ENCODE measurements at regions of chr13 and their contacts with region 1.

Region 1: DNA sequence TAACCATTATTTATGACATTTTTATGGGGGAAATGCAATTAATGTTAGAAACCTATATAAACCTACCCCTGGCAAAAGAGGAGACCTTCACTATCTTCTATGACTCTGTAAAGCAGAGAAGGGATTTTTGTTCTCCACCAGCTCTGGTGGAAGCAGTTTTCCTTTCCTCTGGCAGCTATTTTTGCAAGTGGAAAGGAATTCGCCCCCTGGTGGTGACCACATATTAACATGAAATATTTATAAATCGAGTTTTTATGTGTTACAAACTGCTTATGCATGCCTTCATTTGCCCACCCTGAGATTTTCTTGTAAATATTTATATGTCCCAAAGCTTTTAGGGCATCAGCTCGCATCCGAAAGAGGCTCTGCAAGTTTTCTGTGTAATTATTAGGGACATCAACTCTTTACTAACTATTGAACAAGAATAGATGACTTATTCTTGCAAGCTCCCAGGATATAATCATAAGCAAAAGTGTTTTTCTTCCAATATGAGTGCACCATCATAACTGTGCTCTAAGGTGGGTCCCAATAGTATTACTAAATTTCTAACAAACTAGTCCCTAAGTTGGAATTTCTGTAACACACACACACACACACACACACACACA is 62.4 kb downstream of the SERTM1 start:
- DNase-seq: no peak
- H3K4me3 ChIP-seq: no peak overlapping the region
- H3K27me3 ChIP-seq: no peaks in the 10 kb centered on the region
- CTCF ChIP-seq: peak; percentile 64

Region 2: GRCh38 chr13:36282818-36283445 is 453.3 kb before region 1 on chr13:
- CTCF ChIA-PET with region 1: interaction called, 57 read pairs
- POLR2A ChIA-PET with region 1: no interaction called
- DNase-seq: no peak
- H3K4me3 ChIP-seq: no peak overlapping the region
- H3K27me3 ChIP-seq: no peaks in the 10 kb centered on the region
- CTCF ChIP-seq: peak; percentile 74

Region 3: DNA sequence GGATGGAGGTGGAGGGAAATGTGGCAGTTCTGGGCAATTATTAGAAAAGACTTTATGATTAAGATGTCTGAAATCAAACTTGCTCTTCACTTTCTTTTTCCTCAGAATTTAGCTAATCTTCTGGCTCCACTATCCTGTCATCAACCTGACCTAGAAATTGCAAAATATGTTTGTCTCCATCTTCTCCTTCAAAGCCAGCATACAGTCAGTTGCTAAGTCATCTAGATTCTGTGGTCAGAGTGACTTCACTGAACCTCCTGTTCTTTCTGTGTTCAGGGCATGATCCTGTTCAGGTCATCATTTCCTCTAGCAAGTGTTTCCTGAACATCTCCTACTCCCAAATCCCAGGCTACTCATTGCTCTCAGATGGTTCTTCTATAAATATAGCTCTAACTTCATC is 314.8 kb before region 1 on chr13:
- CTCF ChIA-PET with region 1: interaction called, 15 read pairs
- POLR2A ChIA-PET with region 1: no interaction called
- DNase-seq: no peak
- H3K4me3 ChIP-seq: no peak overlapping the region
- H3K27me3 ChIP-seq: no peaks in the 10 kb centered on the region
- CTCF ChIP-seq: no peak

Region 4: GRCh38 chr13:36724141-36724540 is 12.1 kb before region 1 on chr13:
- CTCF ChIA-PET with region 1: interaction called, 21 read pairs
- POLR2A ChIA-PET with region 1: no interaction called
- DNase-seq: no peak
- H3K4me3 ChIP-seq: no peak overlapping the region
- H3K27me3 ChIP-seq: no peaks in the 10 kb centered on the region; the same call in 1 of the 2 replicates
- CTCF ChIP-seq: no peak